Activated B cell treated with CpG ODN at 0.5 μM for 24 hours (primary cell): ENCODE measurements at regions of chr6 and their contacts with region 1.

Region 1: DNA sequence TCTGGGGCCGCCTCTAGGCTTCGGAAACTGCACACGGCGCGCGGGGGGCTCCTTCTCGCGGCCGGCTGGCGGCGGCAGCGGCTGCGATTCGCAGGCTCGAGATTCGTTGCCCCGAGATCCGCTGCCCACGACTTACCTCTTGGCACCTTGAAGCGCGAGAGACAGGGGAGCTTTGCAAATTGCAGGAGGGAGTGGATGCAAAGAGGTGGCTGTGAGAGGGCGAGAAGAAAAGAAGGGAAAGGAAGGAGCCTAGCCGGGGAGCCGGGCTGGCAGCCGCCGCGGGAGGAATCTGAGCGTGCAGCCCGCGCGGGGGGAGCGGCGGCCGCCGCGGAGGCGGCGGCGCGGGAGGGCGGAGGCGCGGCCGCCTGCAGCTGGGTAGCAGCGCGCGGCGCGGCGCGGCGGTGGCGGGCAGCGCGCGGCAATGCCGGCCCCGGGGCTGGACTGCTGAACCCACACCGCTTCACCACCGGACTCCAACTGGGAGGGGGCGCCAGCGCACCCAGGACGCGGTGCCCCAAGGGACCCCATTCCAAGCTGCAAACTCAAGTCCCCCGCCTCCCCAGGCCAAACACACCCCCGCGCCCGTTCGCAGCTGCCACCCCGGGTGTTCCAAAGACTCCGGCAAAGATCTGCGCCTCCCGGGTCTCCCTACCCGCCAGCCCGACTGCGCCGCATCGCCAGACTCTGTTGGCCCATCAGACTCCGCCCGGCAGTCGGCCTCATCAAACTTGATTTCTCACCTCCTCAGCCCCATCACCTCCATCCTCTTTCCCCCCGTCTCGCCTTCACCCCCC is 44.2 kb upstream of the SUPT3H start:
- DNase-seq: peak; percentile 50
- ATAC-seq: peak; percentile 40
- H3K4me3 Mint-ChIP-seq: peak overlapping the region; percentile 90
- H3K27ac Mint-ChIP-seq: peak overlapping the region; percentile 76
- H3K4me1 Mint-ChIP-seq: peaks cover 54% of the 10 kb centered on the region
- H3K27me3 Mint-ChIP-seq: peaks cover 39% of the 10 kb centered on the region
- CTCF ChIP-seq: no peak

Region 2: DNA sequence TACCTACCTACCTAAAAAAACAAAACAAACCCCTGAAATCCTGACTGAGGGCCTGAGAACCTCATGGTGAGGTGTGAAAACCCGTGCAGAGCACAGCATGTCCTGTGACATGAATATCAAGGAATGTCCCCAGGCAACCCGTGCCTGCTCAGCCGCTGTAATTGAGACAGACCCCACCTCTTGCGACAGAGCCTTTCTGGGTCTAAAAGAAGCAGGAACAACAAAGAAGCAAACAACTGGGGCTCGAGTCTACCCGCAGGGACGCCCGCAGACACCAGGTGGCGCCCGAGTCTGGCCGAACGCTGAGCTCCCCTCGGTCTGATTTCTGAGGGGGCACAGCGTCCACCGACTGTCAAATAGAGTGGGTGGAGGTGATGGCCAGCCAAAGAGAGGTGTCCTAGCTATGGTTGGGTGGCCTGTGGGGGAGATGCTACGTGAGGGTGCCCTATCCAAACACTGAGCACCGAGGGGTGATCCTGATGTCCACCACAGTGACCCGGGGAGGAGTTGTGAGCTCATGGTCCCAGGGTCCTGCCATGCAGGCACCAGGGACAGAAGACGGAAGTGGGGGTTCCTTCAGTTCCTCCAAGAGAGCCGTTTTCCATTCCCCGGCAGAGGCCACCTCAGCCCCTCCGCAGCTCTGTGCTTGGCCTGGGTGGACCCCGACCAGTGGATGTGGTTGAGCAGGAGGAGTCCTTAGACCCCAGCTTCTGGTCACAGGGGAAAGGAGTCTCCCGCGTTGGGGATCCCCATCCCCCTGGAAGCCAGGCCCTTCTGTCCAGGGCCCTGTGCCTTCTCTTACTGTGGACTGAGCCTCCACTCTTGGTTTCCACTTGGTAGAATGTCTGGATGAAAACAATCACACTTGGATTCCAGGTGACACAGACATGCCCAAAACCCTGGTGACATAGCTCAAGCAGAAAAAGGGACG is 766.2 kb before region 1 on chr6:
- CTCF ChIA-PET with region 1: interaction called, 14 read pairs
- POLR2A ChIA-PET with region 1: no interaction called
- intact Hi-C with region 1: loop called (anchors 2 kb)
- DNase-seq: peak; percentile 65
- ATAC-seq: peak; percentile 56
- H3K4me3 Mint-ChIP-seq: no peak overlapping the region
- H3K27ac Mint-ChIP-seq: no peak overlapping the region
- H3K4me1 Mint-ChIP-seq: peaks cover 2% of the 10 kb centered on the region
- H3K27me3 Mint-ChIP-seq: peaks cover 24% of the 10 kb centered on the region
- CTCF ChIP-seq: peak; percentile 71

Region 3: DNA sequence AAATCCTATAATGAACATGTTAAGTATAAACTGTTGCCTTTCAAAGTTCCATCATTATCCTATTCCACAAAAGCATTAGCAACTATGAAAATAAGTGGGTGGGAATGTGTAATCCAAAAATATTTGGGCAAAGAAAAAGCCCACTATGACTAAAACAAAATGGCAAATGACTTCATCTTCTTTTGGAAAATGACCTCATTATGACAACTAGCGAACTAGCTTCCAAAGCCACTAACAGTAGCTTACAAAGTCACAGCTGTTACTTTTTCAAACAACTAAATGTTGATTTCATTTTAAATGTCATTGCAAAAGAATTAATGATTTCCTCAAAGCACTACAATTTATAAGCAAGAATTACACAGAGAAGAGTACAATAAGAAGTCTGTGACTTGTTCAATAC is 143.5 kb before region 1 on chr6:
- CTCF ChIA-PET with region 1: no interaction called
- POLR2A ChIA-PET with region 1: no interaction called
- intact Hi-C with region 1: no loop called
- DNase-seq: no peak
- ATAC-seq: no peak
- H3K4me3 Mint-ChIP-seq: no peak overlapping the region
- H3K27ac Mint-ChIP-seq: no peak overlapping the region
- H3K4me1 Mint-ChIP-seq: no peaks in the 10 kb centered on the region
- H3K27me3 Mint-ChIP-seq: no peaks in the 10 kb centered on the region
- CTCF ChIP-seq: no peak

Region 4: GRCh38 chr6:45377554-45378333 is 44.2 kb before region 1 on chr6 and contains the start of gene SUPT3H:
- CTCF ChIA-PET with region 1: interaction called, 6 read pairs
- POLR2A ChIA-PET with region 1: interaction called, 16 read pairs
- intact Hi-C with region 1: loop called (anchors 1 kb)
- DNase-seq: peak; percentile 91
- ATAC-seq: peak; percentile 79
- H3K4me3 Mint-ChIP-seq: peak within 1 kb of the TSS; percentile 99
- H3K27ac Mint-ChIP-seq: peak within 1 kb of the TSS; percentile 99
- H3K4me1 Mint-ChIP-seq: peaks cover 26% of the 10 kb centered on the region
- H3K27me3 Mint-ChIP-seq: no peaks in the 10 kb centered on the region
- CTCF ChIP-seq: no peak
- total RNA-seq, gene SUPT3H: 9.9 and 10.4 TPM in 2 replicates

Region 5: GRCh38 chr6:45548657-45549515 is 127.0 kb after region 1 on chr6:
- CTCF ChIA-PET with region 1: no interaction called
- POLR2A ChIA-PET with region 1: no interaction called
- intact Hi-C with region 1: loop called (anchors 5 kb)
- DNase-seq: peak; percentile 20
- ATAC-seq: peak; percentile 97
- H3K4me3 Mint-ChIP-seq: peak overlapping the region; percentile 9
- H3K27ac Mint-ChIP-seq: no peak overlapping the region
- H3K4me1 Mint-ChIP-seq: peaks cover 15% of the 10 kb centered on the region
- H3K27me3 Mint-ChIP-seq: no peaks in the 10 kb centered on the region
- CTCF ChIP-seq: no peak

Region 6: GRCh38 chr6:46015119-46015875 is 593.4 kb after region 1 on chr6 and contains the start of gene CLIC5:
- CTCF ChIA-PET with region 1: no interaction called
- POLR2A ChIA-PET with region 1: no interaction called
- intact Hi-C with region 1: no loop called
- DNase-seq: peak; percentile 25
- ATAC-seq: no peak
- H3K4me3 Mint-ChIP-seq: peak within 1 kb of the TSS; percentile 82
- H3K27ac Mint-ChIP-seq: peak within 1 kb of the TSS; percentile 30
- H3K4me1 Mint-ChIP-seq: peaks cover 40% of the 10 kb centered on the region
- H3K27me3 Mint-ChIP-seq: peaks cover 8% of the 10 kb centered on the region
- CTCF ChIP-seq: no peak
- total RNA-seq, gene CLIC5: 2.3 and 2.5 TPM in 2 replicates